Natural killer cell (primary cell): ENCODE measurements at regions of chr17 and their contacts with region 1.

Region 1: DNA sequence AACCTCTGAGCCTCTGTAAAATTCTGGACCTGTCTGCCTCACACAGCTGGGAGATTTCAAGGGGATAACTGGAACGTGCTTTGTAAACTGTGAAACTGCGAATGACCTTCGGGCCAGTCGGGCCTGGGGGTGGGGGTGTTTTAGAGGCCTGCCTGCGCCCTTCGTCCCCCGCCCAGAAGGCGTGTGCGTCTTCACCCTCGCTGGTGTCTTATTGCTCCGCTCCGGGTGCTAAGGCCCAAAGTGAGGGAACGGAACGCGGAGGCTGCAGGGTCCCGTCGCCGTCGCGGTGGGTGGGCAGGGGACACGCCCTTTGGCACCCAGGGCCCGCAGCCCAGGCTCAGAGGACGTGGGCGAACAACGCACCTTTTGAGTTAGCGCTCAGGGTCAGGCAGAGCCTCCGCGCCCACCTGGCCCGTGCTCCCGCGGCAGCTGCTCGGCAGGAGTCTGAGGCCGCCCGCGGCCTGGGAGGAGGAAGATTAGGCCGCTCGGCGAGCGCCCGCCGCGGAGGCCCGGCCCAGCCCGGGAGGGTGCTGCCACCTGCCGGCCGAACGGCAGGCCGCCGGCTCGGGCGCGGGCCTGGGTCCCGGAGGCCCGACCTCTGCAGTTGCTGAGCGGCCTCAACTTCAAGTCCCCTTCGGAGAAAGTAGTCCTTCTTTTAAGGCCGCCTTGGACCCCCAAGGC is 29.7 kb downstream of the DCAKD start:
- DNase-seq: peak; percentile 71 to 84
- ATAC-seq: peak; percentile 74 to 84 (median 80)
- H3K4me3 ChIP-seq: peak overlapping the region; percentile 22
- H3K4me3 Mint-ChIP-seq: peak overlapping the region; percentile 74
- H3K27ac ChIP-seq: no peak overlapping the region
- H3K27ac Mint-ChIP-seq: peak overlapping the region in 1 of 2 donors; percentile 34
- H3K4me1 ChIP-seq: peaks cover 25% of the 10 kb centered on the region
- H3K4me1 Mint-ChIP-seq: peaks cover 12 to 25% of the 10 kb centered on the region in 2 donors
- H3K27me3 ChIP-seq: peaks cover 34% of the 10 kb centered on the region
- H3K27me3 Mint-ChIP-seq: peaks cover 17 to 26% of the 10 kb centered on the region in 2 donors
- CTCF ChIP-seq: peak; percentile 96

Region 2: DNA sequence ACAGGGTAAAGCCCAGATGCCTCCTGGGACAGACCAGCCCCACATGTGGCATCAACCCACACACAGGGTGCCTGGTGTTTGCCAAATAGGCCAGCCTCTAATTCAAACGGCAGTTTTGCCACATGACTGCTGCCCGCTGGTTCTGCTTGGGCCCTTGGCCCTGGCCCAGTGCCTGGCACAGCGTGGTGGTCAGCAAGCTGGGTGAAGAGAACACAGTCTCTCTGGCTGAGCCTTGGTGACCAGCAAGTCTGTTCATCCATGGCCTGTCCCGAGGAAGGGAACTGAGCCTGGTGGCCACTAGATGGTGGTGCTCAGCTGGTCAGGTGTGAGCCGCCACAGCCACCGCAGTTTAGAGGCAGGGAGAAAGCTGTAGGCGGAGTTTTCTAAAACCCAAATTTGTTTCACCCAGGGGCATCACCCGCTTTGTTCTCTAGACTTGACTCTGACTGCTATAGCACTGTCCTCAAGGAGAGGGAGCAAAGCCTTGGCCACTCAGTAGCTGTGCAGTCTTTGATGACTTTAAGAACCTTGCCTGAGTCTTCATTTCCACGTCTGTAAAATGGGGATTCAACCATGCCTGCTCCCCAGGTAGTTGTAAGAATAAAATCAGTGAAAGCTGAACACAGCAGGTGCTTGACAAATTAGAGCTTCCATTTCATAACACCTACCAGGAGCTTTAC is 101.7 kb before region 1 on chr17:
- intact Hi-C with region 1: loop called (anchors 1 kb)
- DNase-seq: peak; percentile 36 to 73
- ATAC-seq: peak; percentile 70 to 91 (median 88)
- H3K4me3 ChIP-seq: no peak overlapping the region
- H3K4me3 Mint-ChIP-seq: no peak overlapping the region
- H3K27ac ChIP-seq: no peak overlapping the region
- H3K27ac Mint-ChIP-seq: no peak overlapping the region
- H3K4me1 ChIP-seq: peaks cover 4% of the 10 kb centered on the region
- H3K4me1 Mint-ChIP-seq: peaks cover 4 to 5% of the 10 kb centered on the region in 2 donors
- H3K27me3 ChIP-seq: peaks cover 5% of the 10 kb centered on the region
- H3K27me3 Mint-ChIP-seq: peaks cover 0 to 18% of the 10 kb centered on the region in 2 donors
- CTCF ChIP-seq: peak; percentile 25

Region 3: GRCh38 chr17:45184144-45184543 is 162.4 kb after region 1 on chr17:
- intact Hi-C with region 1: no loop called
- DNase-seq: no peak
- ATAC-seq: no peak
- H3K4me3 ChIP-seq: no peak overlapping the region
- H3K4me3 Mint-ChIP-seq: no peak overlapping the region
- H3K27ac ChIP-seq: no peak overlapping the region
- H3K27ac Mint-ChIP-seq: no peak overlapping the region
- H3K4me1 ChIP-seq: no peaks in the 10 kb centered on the region
- H3K4me1 Mint-ChIP-seq: no peaks in the 10 kb centered on the region
- H3K27me3 ChIP-seq: no peaks in the 10 kb centered on the region
- H3K27me3 Mint-ChIP-seq: no peaks in the 10 kb centered on the region
- CTCF ChIP-seq: no peak